Mammary epithelial cell (primary cell): ENCODE measurements at regions of chr2 and their contacts with region 1.

Region 1: DNA sequence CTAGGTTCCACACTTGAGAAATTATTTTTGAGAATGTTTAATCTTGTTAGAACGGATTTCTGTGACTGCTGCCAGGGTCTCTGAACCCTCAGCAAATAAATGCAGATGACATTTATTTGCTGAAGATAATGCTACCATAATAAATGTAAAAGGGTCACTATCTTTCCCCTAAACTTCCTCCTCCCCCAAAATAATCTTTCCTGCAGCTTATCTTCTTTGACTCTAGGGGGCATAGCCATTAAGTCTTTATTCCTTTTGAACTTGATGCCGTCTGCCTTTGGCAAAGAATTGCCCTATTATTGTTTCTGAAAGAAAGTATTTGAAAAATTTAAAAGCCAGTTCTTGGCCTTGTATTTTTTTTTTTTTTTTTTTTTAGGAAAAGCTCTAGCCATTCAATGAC is 63.6 kb upstream of the ACSL3 start:
- DNase-seq: no peak
- H3K4me3 ChIP-seq: no peak overlapping the region
- H3K27ac ChIP-seq: no peak overlapping the region
- H3K4me1 ChIP-seq: no peaks in the 10 kb centered on the region
- H3K27me3 ChIP-seq: no peaks in the 10 kb centered on the region
- CTCF ChIP-seq: peak; percentile 66 to 69

Region 2: DNA sequence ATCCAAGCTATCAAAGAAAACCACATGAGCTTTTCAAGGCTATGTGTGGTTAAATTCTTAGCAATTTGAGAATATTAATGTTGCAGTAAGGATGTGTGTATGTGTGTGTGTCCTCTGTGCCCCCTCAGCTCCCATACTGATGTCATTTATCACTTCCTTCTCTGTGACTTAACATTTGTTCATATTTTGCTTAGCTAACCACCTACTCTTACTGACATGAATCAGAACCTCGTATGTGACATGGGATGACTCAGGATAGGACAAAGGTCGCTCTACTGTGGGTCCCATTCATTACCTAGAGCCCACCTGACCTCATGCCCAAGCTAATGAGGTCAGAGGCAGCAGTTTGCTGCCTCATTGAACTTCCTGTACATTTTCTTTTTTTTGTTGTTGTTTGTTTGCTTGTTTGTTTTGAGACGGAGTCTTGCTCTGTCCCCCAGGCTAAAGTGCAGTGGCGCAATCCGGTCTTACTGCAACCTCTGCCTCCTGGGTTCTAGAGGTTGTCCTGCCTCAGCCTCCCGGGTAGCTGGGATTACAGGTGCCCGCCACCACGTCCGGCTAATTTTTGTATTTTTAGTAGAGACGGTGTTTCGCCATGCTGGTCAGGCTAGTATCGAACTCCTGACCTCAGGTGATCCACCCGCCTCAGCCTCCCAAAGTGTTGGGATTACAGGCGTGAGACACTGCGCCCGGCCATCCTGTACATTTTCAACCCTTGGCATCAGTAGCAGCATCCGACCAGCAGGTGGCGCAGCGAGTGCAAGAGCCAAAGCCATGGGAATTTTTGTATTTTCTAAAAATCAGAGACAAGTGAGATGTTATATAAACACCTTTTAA is 89.4 kb before region 1 on chr2:
- CTCF ChIA-PET with region 1: interaction called, 12 read pairs
- dilution Hi-C with region 1: no loop called
- in situ Hi-C with region 1: no loop called
- intact Hi-C with region 1: loop called (anchors 2 kb)
- DNase-seq: peak; percentile 68
- H3K4me3 ChIP-seq: no peak overlapping the region
- H3K27ac ChIP-seq: no peak overlapping the region
- H3K4me1 ChIP-seq: peaks cover 8% of the 10 kb centered on the region
- H3K27me3 ChIP-seq: no peaks in the 10 kb centered on the region
- CTCF ChIP-seq: peak; percentile 83 to 91